Activated T-helper 1 cell treated with anti-CD3 and anti-CD28 coated beads, Interleukin-12 subunit alpha, Interleukin-12 subunit beta, Interleukin-2, Interleukin-4 antibody, amounts not matched to agents 30 ng/mL and 10 ng/mL and 1 ng/mL, durations not matched to agents 14 hours and 24 hours and 36 hours (primary cell): ENCODE measurements at regions of chr15 and their contacts with region 1.

Region 1: GRCh38 chr15:64247906-64248541 is 85.2 kb upstream of the PPIB start:
- DNase-seq: peak; percentile 27
- H3K4me3 Mint-ChIP-seq: peak overlapping the region; percentile 6
- H3K27ac Mint-ChIP-seq: peak overlapping the region; percentile 76
- H3K4me1 Mint-ChIP-seq: peaks cover 57% of the 10 kb centered on the region
- H3K27me3 Mint-ChIP-seq: peaks cover 2% of the 10 kb centered on the region

Region 2: DNA sequence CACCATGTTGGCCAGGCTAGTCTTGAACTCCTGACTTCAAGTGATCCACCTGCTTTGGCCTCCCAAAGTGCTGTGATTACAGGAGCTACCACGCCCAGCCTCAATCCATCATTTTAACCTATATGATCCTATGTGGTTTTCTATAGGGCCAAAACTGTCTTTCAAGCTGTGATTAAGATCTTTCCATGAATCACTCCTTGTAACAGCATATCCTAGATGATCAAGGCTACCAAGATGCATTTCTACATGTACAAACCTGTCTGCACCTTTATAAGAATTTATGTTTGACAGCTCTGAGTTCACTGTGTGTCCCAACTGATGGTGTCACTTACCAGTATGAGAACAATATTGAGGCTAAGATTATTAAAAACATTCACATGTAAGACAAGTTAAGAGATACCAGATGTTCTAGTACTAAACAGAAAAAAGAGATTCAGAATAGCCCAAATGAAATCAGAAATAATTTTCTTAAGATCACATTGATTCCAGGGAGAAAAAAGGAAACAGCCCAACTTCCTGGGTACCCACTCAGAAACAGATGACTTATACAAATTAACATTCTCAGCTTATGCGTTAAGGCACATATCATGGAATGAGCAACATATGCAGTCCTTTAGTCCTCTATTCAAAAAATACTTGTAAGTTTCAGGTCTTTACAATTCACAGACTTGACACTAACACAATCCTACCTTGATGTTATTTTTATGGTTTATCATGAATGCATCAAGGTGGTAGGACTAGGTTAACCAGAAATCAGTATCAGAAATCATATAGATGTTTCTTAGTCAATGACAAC is 60.4 kb before region 1 on chr15:
- intact Hi-C with region 1: loop called (anchors 1 kb)
- DNase-seq: no peak
- H3K4me3 Mint-ChIP-seq: peak overlapping the region; percentile 21
- H3K27ac Mint-ChIP-seq: peak overlapping the region; percentile 62
- H3K4me1 Mint-ChIP-seq: peaks cover 19% of the 10 kb centered on the region
- H3K27me3 Mint-ChIP-seq: no peaks in the 10 kb centered on the region

Region 3: DNA sequence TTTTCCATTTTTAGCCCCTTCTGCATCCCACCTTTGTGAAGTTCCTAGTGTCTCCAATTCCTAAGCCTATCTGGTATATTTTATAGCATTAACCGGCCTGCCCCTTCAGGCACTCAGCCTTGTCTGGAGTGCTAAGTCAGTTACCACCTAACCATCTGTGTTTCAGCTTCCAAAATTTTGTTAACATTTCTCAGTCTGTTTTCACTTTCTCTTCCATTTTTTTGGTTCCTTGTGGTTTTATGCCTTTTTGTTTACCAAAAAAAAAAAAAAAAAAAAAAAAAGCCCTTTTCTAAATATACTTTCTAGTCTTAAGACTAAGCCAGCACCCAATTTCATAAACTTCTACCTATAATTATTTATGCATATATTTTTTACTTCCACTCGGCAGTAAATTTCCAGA is 15.5 kb after region 1 on chr15:
- intact Hi-C with region 1: loop called (anchors 1 kb)
- DNase-seq: no peak
- H3K4me3 Mint-ChIP-seq: no peak overlapping the region
- H3K27ac Mint-ChIP-seq: no peak overlapping the region
- H3K4me1 Mint-ChIP-seq: peaks cover 40% of the 10 kb centered on the region
- H3K27me3 Mint-ChIP-seq: no peaks in the 10 kb centered on the region

Region 4: GRCh38 chr15:64355944-64356709 is 108.1 kb after region 1 on chr15 and contains the start of gene CSNK1G1:
- intact Hi-C with region 1: loop called (anchors 1 kb)
- DNase-seq: peak; percentile 87
- H3K4me3 Mint-ChIP-seq: peak within 1 kb of the TSS; percentile 96
- H3K27ac Mint-ChIP-seq: peak within 1 kb of the TSS; percentile 97
- H3K4me1 Mint-ChIP-seq: peaks cover 19% of the 10 kb centered on the region
- H3K27me3 Mint-ChIP-seq: no peaks in the 10 kb centered on the region
- total RNA-seq, gene CSNK1G1: 31.3 and 33.2 TPM in 2 replicates

Region 5: GRCh38 chr15:64443747-64444621 is 196.0 kb after region 1 on chr15:
- intact Hi-C with region 1: loop called (anchors 1 kb)
- DNase-seq: no peak
- H3K4me3 Mint-ChIP-seq: peak overlapping the region; percentile 74
- H3K27ac Mint-ChIP-seq: peak overlapping the region; percentile 94
- H3K4me1 Mint-ChIP-seq: peaks cover 49% of the 10 kb centered on the region
- H3K27me3 Mint-ChIP-seq: no peaks in the 10 kb centered on the region